AG04450 (cell line): ENCODE measurements at regions of chr15 and their contacts with region 1.

Region 1: DNA sequence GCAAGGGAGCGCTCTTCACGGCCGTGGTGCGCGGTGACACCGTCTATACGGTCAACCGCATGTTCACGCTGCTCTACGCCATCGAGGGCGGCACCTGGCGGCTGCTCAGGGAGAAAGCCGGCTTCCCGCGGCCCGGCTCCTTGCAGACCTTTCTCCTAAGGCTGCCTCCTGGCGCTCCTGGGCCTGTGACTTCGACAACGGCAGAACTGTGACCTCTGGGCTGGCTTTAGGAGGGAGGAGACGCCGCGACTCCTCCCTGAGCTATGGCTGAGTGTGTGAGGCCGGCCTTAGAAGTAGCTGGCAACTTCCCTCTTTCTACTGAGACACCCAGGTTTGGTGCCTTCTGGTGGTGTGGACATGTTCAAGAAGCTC is 1.4 kb downstream of the KBTBD13 start:
- DNase-seq: no peak
- H3K4me3 ChIP-seq: no peak overlapping the region
- H3K27ac ChIP-seq: no peak overlapping the region
- H3K27me3 ChIP-seq: peaks cover 23% of the 10 kb centered on the region
- CTCF ChIP-seq: peak; percentile 56

Region 2: GRCh38 chr15:65054333-65055200 is 23.4 kb before region 1 on chr15:
- CTCF ChIA-PET with region 1: interaction called, 83 read pairs
- POLR2A ChIA-PET with region 1: interaction called, 6 read pairs
- DNase-seq: no peak
- H3K4me3 ChIP-seq: no peak overlapping the region
- H3K27ac ChIP-seq: no peak overlapping the region
- H3K27me3 ChIP-seq: peaks cover under 1% of the 10 kb centered on the region
- CTCF ChIP-seq: peak; percentile 99